ENCODE measurements at regions of chr20 and their contacts with region 1.

Region 1: GRCh38 chr20:44885392-44886265 is at the start of gene YWHAB:
- DNase-seq: peak; percentile 90 to 98 (median 96)
- H3K4me3 ChIP-seq: peak within 1 kb of the TSS; percentile 70 to 100 (median 97)
- H3K27ac ChIP-seq: peak within 1 kb of the TSS; percentile 26 to 97 (median 92)
- H3K27me3 ChIP-seq: no peaks in the 10 kb centered on the region
- CTCF ChIP-seq: peak in 12 of 56 donors; percentile 5 to 43 (median 14)
- total RNA-seq, gene YWHAB: 122 to 473 (median 343) TPM

Region 2: GRCh38 chr20:44210422-44211176 is 675.0 kb before region 1 on chr20 and contains the start of gene OSER1:
- intact Hi-C with region 1: loop called (anchors 10 kb)
- DNase-seq: peak; percentile 95 to 98 (median 97)
- H3K4me3 ChIP-seq: peak within 1 kb of the TSS; percentile 75 to 100 (median 96)
- H3K27ac ChIP-seq: peak within 1 kb of the TSS; percentile 67 to 98 (median 92)
- H3K27me3 ChIP-seq: no peaks in the 10 kb centered on the region
- CTCF ChIP-seq: peak in 34 of 56 donors; percentile 7 to 51 (median 30)
- total RNA-seq, gene OSER1: 20.8 to 41.9 (median 29.8) TPM

Region 3: GRCh38 chr20:44747166-44748004 is 138.2 kb before region 1 on chr20:
- intact Hi-C with region 1: loop called in 1 of 2 experiments (anchors 5 kb)
- DNase-seq: peak; percentile 61 to 94 (median 84)
- H3K4me3 ChIP-seq: peak overlapping the region in 1 of 59 donors; percentile 2
- H3K27ac ChIP-seq: peak overlapping the region in 5 of 59 donors; percentile 1 to 50 (median 31)
- H3K27me3 ChIP-seq: peaks cover 0 to 13% (median 0%) of the 10 kb centered on the region in 45 donors
- CTCF ChIP-seq: peak; percentile 52 to 83 (median 72)